Activated CD4-positive, alpha-beta memory T cell treated with anti-CD3 and anti-CD28 coated beads for 36 hours (primary cell): ENCODE measurements at regions of chr1 and their contacts with region 1.

Region 1: GRCh38 chr1:155084722-155085503 is 6.3 kb downstream of the EFNA3 start:
- DNase-seq: peak; percentile 94
- H3K4me3 Mint-ChIP-seq: peak overlapping the region; percentile 92
- H3K27ac Mint-ChIP-seq: peak overlapping the region; percentile 84
- H3K4me1 Mint-ChIP-seq: peaks cover 35% of the 10 kb centered on the region
- H3K27me3 Mint-ChIP-seq: peaks cover 31% of the 10 kb centered on the region

Region 2: GRCh38 chr1:154767315-154768240 is 317.3 kb before region 1 on chr1:
- CTCF ChIA-PET with region 1: no interaction called
- POLR2A ChIA-PET with region 1: no interaction called
- intact Hi-C with region 1: no loop called
- DNase-seq: no peak
- H3K4me3 Mint-ChIP-seq: no peak overlapping the region
- H3K27ac Mint-ChIP-seq: no peak overlapping the region
- H3K4me1 Mint-ChIP-seq: peaks cover 11% of the 10 kb centered on the region
- H3K27me3 Mint-ChIP-seq: peaks cover 3% of the 10 kb centered on the region

Region 3: GRCh38 chr1:154961497-154962262 is 123.2 kb before region 1 on chr1 and contains the start of gene PYGO2:
- CTCF ChIA-PET with region 1: interaction called, 12 read pairs
- POLR2A ChIA-PET with region 1: no interaction called
- intact Hi-C with region 1: no loop called
- DNase-seq: peak; percentile 88
- H3K4me3 Mint-ChIP-seq: peak within 1 kb of the TSS; percentile 96
- H3K27ac Mint-ChIP-seq: peak within 1 kb of the TSS; percentile 92
- H3K4me1 Mint-ChIP-seq: peaks cover 36% of the 10 kb centered on the region
- H3K27me3 Mint-ChIP-seq: no peaks in the 10 kb centered on the region
- total RNA-seq, gene PYGO2: 31.5 to 32.4 TPM

Region 4: DNA sequence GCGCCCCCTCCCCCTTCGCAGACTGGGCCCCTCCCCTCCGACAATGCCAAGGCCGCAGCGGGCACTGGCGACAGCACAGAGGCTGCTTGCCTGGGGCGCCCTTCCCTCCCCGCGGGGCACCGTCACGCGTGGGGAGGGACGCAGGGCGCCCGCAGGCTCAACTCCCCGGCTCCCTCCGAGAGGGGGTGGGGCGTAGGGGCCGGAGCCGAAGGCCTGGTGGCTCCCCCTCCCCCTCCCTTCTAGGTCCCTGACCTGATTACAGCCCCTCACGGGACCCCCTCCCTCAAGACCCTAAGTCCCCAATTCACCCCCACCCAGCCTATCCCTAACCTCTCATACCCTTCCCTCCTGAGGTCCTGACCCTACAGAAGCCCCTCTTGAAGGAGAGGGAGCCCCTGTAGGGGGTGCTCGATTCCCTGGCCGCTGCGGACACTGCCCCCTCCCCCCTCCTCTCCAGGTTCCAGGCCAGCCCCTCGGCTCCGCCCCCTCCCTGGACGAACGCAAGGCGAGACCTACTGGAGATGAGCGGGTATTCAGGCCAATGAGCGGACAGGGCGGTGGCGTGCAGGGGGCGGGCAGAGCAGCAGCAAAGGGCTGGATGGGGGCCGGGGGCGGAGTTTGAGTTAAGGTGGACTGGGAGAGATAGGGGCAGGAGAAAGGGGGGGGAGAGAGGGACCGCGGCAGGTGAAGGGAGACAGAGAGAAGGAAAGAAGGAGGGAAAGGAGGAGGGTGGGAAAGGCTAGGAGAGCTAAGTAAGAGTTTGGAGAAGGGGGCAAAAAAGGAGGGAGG is 83.0 kb before region 1 on chr1:
- CTCF ChIA-PET with region 1: interaction called, 14 read pairs
- POLR2A ChIA-PET with region 1: no interaction called
- intact Hi-C with region 1: loop called (anchors 2 kb)
- DNase-seq: peak; percentile 100
- H3K4me3 Mint-ChIP-seq: peak overlapping the region; percentile 94
- H3K27ac Mint-ChIP-seq: peak overlapping the region; percentile 95
- H3K4me1 Mint-ChIP-seq: peaks cover 50% of the 10 kb centered on the region
- H3K27me3 Mint-ChIP-seq: no peaks in the 10 kb centered on the region

Region 5: DNA sequence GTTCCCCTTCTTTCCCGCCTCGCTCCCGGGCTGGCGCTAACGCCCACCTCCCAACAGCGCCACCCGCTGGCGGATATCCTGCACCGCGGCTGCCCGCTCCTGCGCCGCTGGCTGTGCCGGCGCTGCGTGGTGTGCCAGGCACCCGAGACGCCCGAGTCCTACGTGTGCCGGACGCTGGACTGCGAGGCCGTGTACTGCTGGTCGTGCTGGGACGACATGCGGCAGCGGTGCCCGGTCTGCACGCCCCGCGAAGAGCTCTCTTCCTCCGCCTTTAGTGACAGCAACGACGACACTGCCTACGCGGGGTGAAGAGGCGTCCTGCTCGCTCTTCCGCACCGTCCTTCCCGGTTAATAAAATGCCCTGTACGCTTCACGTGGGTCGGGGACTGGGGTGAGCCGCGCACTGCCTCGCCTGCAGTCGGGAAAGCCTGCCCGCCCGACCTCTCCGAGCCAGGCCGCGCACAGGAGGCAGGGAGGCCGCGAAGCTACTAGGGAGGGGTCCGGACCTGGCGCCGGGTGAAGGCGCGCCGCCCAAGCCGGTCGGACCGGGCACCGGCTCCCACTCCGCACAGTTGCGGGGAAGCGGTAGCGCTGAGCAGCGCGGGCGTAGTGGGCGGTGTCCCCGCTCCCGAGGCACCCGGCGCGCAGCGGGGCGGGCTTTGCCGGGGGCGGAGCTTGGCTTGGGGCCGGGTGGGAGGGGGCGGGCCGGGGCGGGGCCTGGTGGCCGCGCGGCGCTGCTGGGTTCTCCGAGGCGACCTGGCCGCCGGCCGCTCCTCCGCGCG is 34.2 kb before region 1 on chr1 and contains the start of gene ADAM15:
- CTCF ChIA-PET with region 1: interaction called, 92 read pairs
- POLR2A ChIA-PET with region 1: interaction called, 4 read pairs
- intact Hi-C with region 1: loop called (anchors 2 kb)
- DNase-seq: peak; percentile 87
- H3K4me3 Mint-ChIP-seq: peak within 1 kb of the TSS; percentile 81
- H3K27ac Mint-ChIP-seq: peak within 1 kb of the TSS; percentile 64
- H3K4me1 Mint-ChIP-seq: peaks cover 22% of the 10 kb centered on the region
- H3K27me3 Mint-ChIP-seq: no peaks in the 10 kb centered on the region
- total RNA-seq, gene ADAM15: 54.3 to 60.5 TPM

Region 6: DNA sequence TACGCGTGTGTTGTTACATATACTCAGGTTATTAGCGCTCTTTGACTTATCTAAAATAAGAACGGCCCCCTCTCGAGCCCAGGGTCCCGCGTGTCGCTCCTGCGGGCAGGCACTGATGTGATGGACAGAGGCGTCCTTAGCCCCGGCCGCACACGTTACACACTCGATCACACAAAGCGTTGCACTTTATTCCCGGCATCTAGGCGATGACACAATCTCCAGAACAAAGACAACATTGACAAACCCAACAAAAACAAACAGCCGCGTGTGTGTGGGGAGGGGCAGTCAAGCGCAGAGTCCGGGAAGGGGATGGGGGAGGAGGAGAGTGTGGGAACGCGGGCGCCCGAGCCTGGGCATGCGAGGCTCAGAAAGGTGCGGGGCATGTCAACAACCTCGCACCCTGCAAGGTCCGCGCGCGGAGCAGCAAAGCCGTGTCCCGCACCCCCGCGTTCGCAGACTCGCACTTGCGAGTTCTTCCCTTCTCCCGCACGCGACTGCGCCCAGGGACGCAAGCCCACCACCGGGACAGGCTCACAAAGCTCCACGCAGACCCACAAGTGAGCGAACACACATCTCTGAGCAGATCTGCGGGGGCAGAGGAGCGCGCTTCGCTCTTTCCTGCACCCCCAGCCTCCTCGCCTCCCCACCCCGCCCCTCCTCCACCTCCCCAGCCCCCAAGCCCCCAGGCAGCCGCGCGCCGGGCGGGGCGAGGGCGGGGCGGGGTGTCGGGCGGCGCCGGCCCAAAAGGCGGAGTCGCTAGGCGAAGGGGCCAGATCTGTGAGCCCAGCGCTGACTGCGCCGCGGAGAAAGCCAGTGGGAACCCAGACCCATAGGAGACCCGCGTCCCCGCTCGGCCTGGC is 42.4 kb after region 1 on chr1 and contains the start of gene EFNA1:
- CTCF ChIA-PET with region 1: interaction called, 11 read pairs
- POLR2A ChIA-PET with region 1: no interaction called
- intact Hi-C with region 1: no loop called
- DNase-seq: peak; percentile 45
- H3K4me3 Mint-ChIP-seq: peak within 1 kb of the TSS; percentile 64
- H3K27ac Mint-ChIP-seq: no peak within 1 kb of the TSS
- H3K4me1 Mint-ChIP-seq: peaks cover 30% of the 10 kb centered on the region
- H3K27me3 Mint-ChIP-seq: peaks cover 25% of the 10 kb centered on the region
- total RNA-seq, gene EFNA1: 0.24 TPM in 1 of 2 experiments, not detected in the other

Region 7: GRCh38 chr1:155172732-155173477 is 88.0 kb after region 1 on chr1 and contains the start of gene KRTCAP2:
- CTCF ChIA-PET with region 1: interaction called, 274 read pairs
- POLR2A ChIA-PET with region 1: interaction called, 5 read pairs
- intact Hi-C with region 1: loop called (anchors 2 kb)
- DNase-seq: peak; percentile 98
- H3K4me3 Mint-ChIP-seq: peak within 1 kb of the TSS; percentile 93
- H3K27ac Mint-ChIP-seq: peak within 1 kb of the TSS; percentile 96
- H3K4me1 Mint-ChIP-seq: peaks cover 48% of the 10 kb centered on the region
- H3K27me3 Mint-ChIP-seq: no peaks in the 10 kb centered on the region
- total RNA-seq, gene KRTCAP2: 138 to 146 TPM

Region 8: GRCh38 chr1:156193488-156194299 is 1108.8 kb after region 1 on chr1 and contains the start of gene SLC25A44:
- CTCF ChIA-PET with region 1: no interaction called
- POLR2A ChIA-PET with region 1: no interaction called
- intact Hi-C with region 1: no loop called
- DNase-seq: peak; percentile 99
- H3K4me3 Mint-ChIP-seq: peak within 1 kb of the TSS; percentile 100
- H3K27ac Mint-ChIP-seq: peak within 1 kb of the TSS; percentile 81
- H3K4me1 Mint-ChIP-seq: peaks cover 61% of the 10 kb centered on the region
- H3K27me3 Mint-ChIP-seq: no peaks in the 10 kb centered on the region
- total RNA-seq, gene SLC25A44: 61.3 to 62.2 TPM